ENCODE measurements at regions of chr12 and their contacts with region 1.

Region 1: GRCh38 chr12:92987362-92987761 is 58.3 kb upstream of the EEA1 start:
- DNase-seq: no peak
- H3K4me3 Mint-ChIP-seq: no peak overlapping the region
- H3K27ac Mint-ChIP-seq: peak overlapping the region; percentile 79
- H3K4me1 Mint-ChIP-seq: peaks cover 30% of the 10 kb centered on the region
- H3K27me3 Mint-ChIP-seq: no peaks in the 10 kb centered on the region

Region 2: DNA sequence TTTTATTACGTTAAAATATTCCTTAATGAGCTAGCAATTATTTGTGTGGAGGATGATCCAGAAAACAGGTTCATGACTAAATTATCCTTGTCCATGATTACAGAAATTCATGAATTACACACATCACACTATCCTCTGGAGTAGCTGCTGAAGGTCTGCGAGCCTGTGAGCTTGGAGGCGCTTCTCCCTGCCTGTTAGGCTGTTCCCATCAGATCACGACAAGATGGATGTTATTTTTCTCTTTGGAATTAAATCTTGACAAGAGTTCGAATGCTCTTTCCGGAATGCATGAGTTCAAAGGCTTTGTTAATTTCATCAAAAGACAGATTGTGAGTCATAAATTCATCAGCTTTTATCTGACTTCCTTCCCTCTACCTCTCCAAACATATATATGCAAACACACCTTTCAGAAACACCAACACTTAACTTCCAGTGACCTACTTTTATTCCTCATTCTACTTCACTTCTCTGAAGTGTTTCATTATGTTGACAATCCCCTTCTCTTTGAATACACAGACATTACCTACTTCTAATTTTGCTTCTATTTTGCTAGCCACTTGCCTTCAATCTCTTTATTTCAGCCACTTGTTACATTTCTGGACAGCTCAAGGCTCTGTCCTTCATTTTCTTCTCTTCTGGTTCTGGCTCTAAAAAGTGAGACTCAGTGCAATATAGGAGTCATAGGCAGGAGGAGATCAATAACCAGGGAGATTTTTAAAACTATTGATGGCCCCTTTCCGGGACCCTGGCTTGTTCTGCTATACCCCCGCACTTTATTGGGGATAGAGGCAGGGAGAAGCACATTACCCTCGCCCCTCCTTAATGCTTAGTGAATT is 1116.3 kb before region 1 on chr12:
- intact Hi-C with region 1: no loop called
- DNase-seq: no peak
- H3K4me3 Mint-ChIP-seq: peak overlapping the region; percentile 0
- H3K27ac Mint-ChIP-seq: peak overlapping the region; percentile 29
- H3K4me1 Mint-ChIP-seq: peaks cover 42% of the 10 kb centered on the region
- H3K27me3 Mint-ChIP-seq: no peaks in the 10 kb centered on the region

Region 3: GRCh38 chr12:92784795-92785562 is 202.4 kb before region 1 on chr12:
- intact Hi-C with region 1: loop called (anchors 1 kb)
- DNase-seq: peak; percentile 5
- H3K4me3 Mint-ChIP-seq: no peak overlapping the region
- H3K27ac Mint-ChIP-seq: no peak overlapping the region
- H3K4me1 Mint-ChIP-seq: peaks cover 4% of the 10 kb centered on the region
- H3K27me3 Mint-ChIP-seq: no peaks in the 10 kb centered on the region

Region 4: DNA sequence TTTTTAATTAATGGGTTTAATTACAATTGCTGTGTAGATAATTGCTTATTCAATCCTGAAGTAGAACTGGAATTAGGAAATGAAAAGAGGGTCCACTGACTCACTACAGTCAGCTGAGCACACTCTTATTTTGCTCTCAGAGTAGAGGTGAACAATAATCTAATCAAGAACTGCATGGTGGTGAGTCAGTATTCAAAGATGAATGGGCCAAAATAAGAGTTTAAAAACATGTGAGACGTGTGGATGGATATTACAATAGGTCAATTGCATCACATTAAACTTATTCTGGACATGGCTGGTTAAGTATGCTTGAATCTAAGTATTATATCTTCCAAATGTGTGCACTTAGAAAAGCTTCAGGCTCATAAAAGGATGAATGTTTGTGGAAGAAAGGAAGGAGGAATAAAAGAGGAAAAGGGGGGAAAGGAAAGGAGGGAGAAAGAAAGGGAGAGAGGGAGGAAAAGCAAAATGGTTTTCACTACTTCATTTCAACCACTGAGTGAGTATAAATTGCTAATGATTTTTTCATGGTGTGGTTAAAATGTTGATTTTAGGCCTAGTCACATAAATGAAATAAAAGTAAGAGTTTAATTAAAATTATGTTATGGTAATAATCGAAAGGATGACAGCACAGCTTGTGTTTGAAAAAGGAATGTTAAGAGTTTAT is 31.2 kb before region 1 on chr12:
- intact Hi-C with region 1: no loop called
- DNase-seq: no peak
- H3K4me3 Mint-ChIP-seq: no peak overlapping the region
- H3K27ac Mint-ChIP-seq: no peak overlapping the region
- H3K4me1 Mint-ChIP-seq: no peaks in the 10 kb centered on the region
- H3K27me3 Mint-ChIP-seq: no peaks in the 10 kb centered on the region

Region 5: DNA sequence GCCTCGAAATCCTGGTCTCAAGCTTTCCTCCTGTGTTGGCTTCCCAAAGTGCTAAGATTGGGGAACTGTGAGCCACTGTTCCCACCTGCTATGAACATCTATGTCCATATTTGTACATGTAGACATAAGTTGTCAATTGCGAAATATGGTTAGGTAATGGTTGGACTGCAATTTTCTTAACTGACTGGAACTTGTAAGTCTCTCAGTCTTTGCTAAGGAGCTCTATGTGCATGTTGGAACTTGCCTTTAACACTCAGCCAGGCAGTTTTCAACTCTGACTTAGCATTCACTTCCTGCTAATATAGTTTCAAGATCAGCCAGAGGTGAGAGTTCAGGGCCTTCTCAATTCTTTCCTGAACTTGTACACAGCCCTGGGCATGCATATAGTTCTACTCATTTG is 13.8 kb before region 1 on chr12:
- intact Hi-C with region 1: no loop called
- DNase-seq: no peak
- H3K4me3 Mint-ChIP-seq: no peak overlapping the region
- H3K27ac Mint-ChIP-seq: no peak overlapping the region
- H3K4me1 Mint-ChIP-seq: peaks cover 8% of the 10 kb centered on the region
- H3K27me3 Mint-ChIP-seq: no peaks in the 10 kb centered on the region

Region 6: GRCh38 chr12:93025145-93025805 is 37.9 kb after region 1 on chr12:
- intact Hi-C with region 1: loop called (anchors 1 kb)
- DNase-seq: no peak
- H3K4me3 Mint-ChIP-seq: no peak overlapping the region
- H3K27ac Mint-ChIP-seq: no peak overlapping the region
- H3K4me1 Mint-ChIP-seq: no peaks in the 10 kb centered on the region
- H3K27me3 Mint-ChIP-seq: peaks cover 2% of the 10 kb centered on the region

Region 7: GRCh38 chr12:93243689-93244513 is 256.5 kb after region 1 on chr12:
- intact Hi-C with region 1: loop called (anchors 5 kb)
- DNase-seq: peak; percentile 4
- H3K4me3 Mint-ChIP-seq: peak overlapping the region; percentile 63
- H3K27ac Mint-ChIP-seq: peak overlapping the region; percentile 69
- H3K4me1 Mint-ChIP-seq: peaks cover 59% of the 10 kb centered on the region
- H3K27me3 Mint-ChIP-seq: no peaks in the 10 kb centered on the region

Region 8: GRCh38 chr12:93419388-93420034 is 432.1 kb after region 1 on chr12:
- intact Hi-C with region 1: loop called (anchors 1 kb)
- DNase-seq: no peak
- H3K4me3 Mint-ChIP-seq: no peak overlapping the region
- H3K27ac Mint-ChIP-seq: peak overlapping the region; percentile 3
- H3K4me1 Mint-ChIP-seq: peaks cover 73% of the 10 kb centered on the region
- H3K27me3 Mint-ChIP-seq: no peaks in the 10 kb centered on the region

Measured in activated T-helper 1 cell treated with anti-CD3 and anti-CD28 coated beads, Interleukin-12 subunit alpha, Interleukin-12 subunit beta, Interleukin-2, Interleukin-4 antibody, amounts not matched to agents 30 ng/mL and 10 ng/mL and 1 ng/mL, durations not matched to agents 14 hours and 24 hours and 36 hours (primary cell).